Sigmoid colon (tissue), 7 donors: ENCODE measurements at regions of chr6 and their contacts with region 1.

Region 1: GRCh38 chr6:100001915-100002388 is 7.9 kb upstream of the MCHR2 start:
- DNase-seq: no peak
- H3K4me3 ChIP-seq: no peak overlapping the region
- H3K27ac ChIP-seq: no peak overlapping the region
- H3K4me1 ChIP-seq: no peaks in the 10 kb centered on the region
- H3K27me3 ChIP-seq: peaks cover 0 to 10% (median 0%) of the 10 kb centered on the region in 3 donors
- CTCF ChIP-seq: peak in 3 of 4 experiments; percentile 63 to 88 (median 75)
- EP300 ChIP-seq: no peak
- POLR2A ChIP-seq: no peak

Region 2: GRCh38 chr6:99868074-99868702 is 133.8 kb before region 1 on chr6:
- intact Hi-C with region 1: no loop called
- DNase-seq: peak; percentile 74
- H3K4me3 ChIP-seq: no peak overlapping the region
- H3K27ac ChIP-seq: no peak overlapping the region
- H3K4me1 ChIP-seq: no peaks in the 10 kb centered on the region
- H3K27me3 ChIP-seq: peaks cover 0 to 3% (median 0%) of the 10 kb centered on the region in 3 donors
- CTCF ChIP-seq: peak in 3 of 4 experiments; percentile 43 to 66 (median 60)
- EP300 ChIP-seq: no peak
- POLR2A ChIP-seq: no peak

Region 3: DNA sequence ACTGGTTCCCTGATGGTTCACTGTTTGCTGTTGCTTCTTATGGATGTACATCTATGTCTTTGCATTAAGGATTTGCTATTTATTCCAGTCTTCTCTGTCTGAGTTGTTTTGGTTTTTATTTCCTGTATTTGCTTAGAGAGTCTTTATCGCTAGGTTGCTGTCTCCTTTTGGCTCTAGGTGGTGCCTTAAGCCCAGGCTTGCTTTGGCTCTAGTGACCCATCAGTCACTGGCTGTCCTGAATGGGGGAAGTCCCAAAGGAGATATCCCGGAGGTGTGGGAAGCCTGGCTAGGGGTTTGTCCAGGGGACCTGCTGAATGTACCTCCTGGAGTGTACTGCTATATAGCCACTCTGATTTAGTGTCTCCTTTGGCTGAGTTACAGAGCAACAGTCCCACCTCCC is 61.4 kb before region 1 on chr6:
- intact Hi-C with region 1: no loop called
- DNase-seq: no peak
- H3K4me3 ChIP-seq: no peak overlapping the region
- H3K27ac ChIP-seq: no peak overlapping the region
- H3K4me1 ChIP-seq: no peaks in the 10 kb centered on the region
- H3K27me3 ChIP-seq: no peaks in the 10 kb centered on the region
- CTCF ChIP-seq: no peak
- EP300 ChIP-seq: no peak
- POLR2A ChIP-seq: no peak

Region 4: DNA sequence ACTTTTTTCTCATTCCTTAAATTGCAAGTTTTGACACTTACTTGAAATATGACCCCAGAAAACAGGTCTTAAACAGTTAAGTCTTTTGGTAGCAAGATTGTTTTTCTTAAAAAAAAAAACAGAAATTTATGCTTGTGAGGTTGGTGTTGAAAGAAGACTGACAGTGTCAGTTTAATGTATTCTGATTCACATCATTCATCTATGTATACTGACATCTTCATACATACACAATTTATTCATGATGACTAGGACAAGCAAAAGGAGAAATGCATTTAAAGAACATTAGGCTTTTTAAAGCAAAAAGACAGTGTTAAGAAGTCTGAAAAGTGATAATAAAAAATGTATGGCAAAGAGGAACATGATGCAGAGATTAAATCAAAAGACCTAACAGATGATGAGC is 34.9 kb before region 1 on chr6:
- intact Hi-C with region 1: no loop called
- DNase-seq: no peak
- H3K4me3 ChIP-seq: no peak overlapping the region
- H3K27ac ChIP-seq: no peak overlapping the region
- H3K4me1 ChIP-seq: no peaks in the 10 kb centered on the region
- H3K27me3 ChIP-seq: no peaks in the 10 kb centered on the region
- CTCF ChIP-seq: no peak
- EP300 ChIP-seq: no peak
- POLR2A ChIP-seq: no peak

Region 5: DNA sequence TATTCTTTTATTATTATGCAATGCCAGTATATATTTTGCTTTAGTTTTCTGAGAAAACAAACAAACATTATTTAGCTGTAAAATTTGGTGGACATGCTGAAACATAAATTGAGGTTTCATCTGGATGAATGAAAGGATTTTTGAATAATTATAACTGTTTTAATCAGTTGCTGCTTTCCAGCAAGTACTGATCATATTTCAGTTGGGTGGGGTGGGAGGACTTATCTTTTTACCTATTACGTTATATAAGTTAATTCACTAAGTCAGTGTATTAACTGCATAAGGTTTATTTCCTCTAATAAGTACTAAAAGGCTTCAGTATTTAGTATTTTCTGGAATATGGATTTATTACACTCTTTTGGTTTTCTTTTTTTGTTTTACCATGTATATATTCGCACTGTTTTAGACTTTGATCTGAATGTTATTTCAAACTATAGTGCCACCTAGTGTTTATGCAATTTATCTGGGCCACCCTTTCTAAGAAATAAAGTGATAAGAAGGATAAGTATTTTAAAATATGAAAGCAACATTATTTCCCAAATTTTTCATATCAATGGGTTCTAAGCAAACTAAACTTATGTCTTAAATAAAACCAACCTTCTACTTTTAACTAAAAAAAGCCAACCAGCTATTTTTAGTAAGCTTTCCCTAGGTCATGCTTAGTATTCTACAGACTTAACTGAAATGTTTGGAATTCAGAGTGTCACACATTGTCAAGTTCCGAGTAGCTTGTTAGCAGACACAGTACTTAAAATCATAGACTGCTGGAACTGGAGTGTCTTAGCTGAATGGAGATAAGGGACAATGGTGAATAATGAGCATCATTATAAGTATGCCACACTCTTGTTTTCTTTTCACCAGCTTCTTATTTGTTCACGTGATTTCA is 97.5 kb after region 1 on chr6:
- intact Hi-C with region 1: loop called (anchors 5 kb)
- DNase-seq: no peak
- H3K4me3 ChIP-seq: no peak overlapping the region
- H3K27ac ChIP-seq: no peak overlapping the region
- H3K4me1 ChIP-seq: no peaks in the 10 kb centered on the region
- H3K27me3 ChIP-seq: no peaks in the 10 kb centered on the region
- CTCF ChIP-seq: peak in 2 of 4 experiments; percentile 16 to 54
- EP300 ChIP-seq: no peak
- POLR2A ChIP-seq: no peak

Region 6: GRCh38 chr6:100479179-100480035 is 477.5 kb after region 1 on chr6:
- intact Hi-C with region 1: loop called (anchors 10 kb)
- DNase-seq: no peak
- H3K4me3 ChIP-seq: no peak overlapping the region
- H3K27ac ChIP-seq: no peak overlapping the region
- H3K4me1 ChIP-seq: no peaks in the 10 kb centered on the region
- H3K27me3 ChIP-seq: peaks cover 0 to 11% (median 0%) of the 10 kb centered on the region in 3 donors
- CTCF ChIP-seq: peak in 2 of 4 experiments; percentile 44 to 47
- EP300 ChIP-seq: no peak
- POLR2A ChIP-seq: no peak

Region 7: DNA sequence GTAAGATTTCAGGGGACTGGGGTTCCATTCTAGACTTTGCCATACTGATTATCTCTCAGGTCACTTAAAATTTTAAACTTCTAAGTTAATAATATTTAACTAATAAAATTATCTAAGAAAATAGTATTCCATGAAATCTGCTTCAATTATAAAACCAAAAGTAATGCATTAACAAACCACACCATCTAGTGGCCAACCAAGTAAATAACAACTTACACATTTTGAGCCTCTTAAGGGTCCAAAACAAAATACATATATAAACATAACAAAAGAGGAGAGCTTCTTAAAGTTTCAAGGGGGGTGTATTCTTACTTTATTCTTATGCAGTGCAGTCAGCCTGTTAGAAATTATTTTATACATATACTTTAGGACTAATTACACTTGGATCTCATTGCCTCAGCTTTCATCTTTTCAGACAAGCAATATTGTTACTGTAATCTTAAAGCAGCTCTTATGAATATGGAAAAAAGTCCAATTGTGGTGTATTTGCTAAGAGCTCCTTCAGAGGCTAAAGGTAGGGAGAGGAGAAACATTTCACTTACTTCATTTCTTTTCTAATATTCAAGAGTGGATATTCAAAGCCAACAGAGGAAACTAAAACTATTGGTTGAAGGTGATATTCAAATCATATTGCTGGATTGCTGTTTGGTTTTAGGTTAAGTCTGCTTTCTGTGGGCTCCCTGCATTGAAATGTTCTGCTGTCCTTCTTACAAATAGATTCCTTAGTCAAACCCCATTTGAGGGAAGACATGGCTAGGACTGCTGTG is 662.5 kb after region 1 on chr6:
- intact Hi-C with region 1: loop called (anchors 10 kb)
- DNase-seq: no peak
- H3K4me3 ChIP-seq: no peak overlapping the region
- H3K27ac ChIP-seq: no peak overlapping the region
- H3K4me1 ChIP-seq: no peaks in the 10 kb centered on the region
- H3K27me3 ChIP-seq: no peaks in the 10 kb centered on the region
- CTCF ChIP-seq: peak in 3 of 4 experiments; percentile 34 to 68 (median 54)
- EP300 ChIP-seq: no peak
- POLR2A ChIP-seq: no peak